CD4-positive, alpha-beta memory T cell (primary cell): ENCODE measurements at regions of chr3 and their contacts with region 1.

Region 1: GRCh38 chr3:107927361-107928083 is 163.3 kb downstream of the CD47 start:
- DNase-seq: peak; percentile 53 to 62 (median 58)
- H3K4me3 ChIP-seq: peak overlapping the region; percentile 54 to 65
- H3K4me3 Mint-ChIP-seq: peak overlapping the region; percentile 86 to 92 (median 92)
- H3K27ac ChIP-seq: no peak overlapping the region
- H3K27ac Mint-ChIP-seq: peak overlapping the region in 5 of 7 donors; percentile 24 to 80 (median 67)
- H3K4me1 ChIP-seq: peaks cover 7% of the 10 kb centered on the region
- H3K4me1 Mint-ChIP-seq: peaks cover 7 to 15% (median 9%) of the 10 kb centered on the region in 4 donors
- H3K27me3 ChIP-seq: no peaks in the 10 kb centered on the region
- H3K27me3 Mint-ChIP-seq: peaks cover 0 to 4% of the 10 kb centered on the region in 2 donors

Region 2: GRCh38 chr3:107531917-107532469 is 395.5 kb before region 1 on chr3:
- CTCF ChIA-PET with region 1: no interaction called
- POLR2A ChIA-PET with region 1: no interaction called
- intact Hi-C with region 1: no loop called
- DNase-seq: no peak
- H3K4me3 ChIP-seq: no peak overlapping the region
- H3K4me3 Mint-ChIP-seq: peak overlapping the region in 1 of 8 donors; percentile 3
- H3K27ac ChIP-seq: no peak overlapping the region
- H3K27ac Mint-ChIP-seq: peak overlapping the region in 1 of 7 donors; percentile 13
- H3K4me1 ChIP-seq: peaks cover 15% of the 10 kb centered on the region
- H3K4me1 Mint-ChIP-seq: peaks cover 19 to 52% (median 28%) of the 10 kb centered on the region in 4 donors
- H3K27me3 ChIP-seq: no peaks in the 10 kb centered on the region
- H3K27me3 Mint-ChIP-seq: no peaks in the 10 kb centered on the region

Region 3: DNA sequence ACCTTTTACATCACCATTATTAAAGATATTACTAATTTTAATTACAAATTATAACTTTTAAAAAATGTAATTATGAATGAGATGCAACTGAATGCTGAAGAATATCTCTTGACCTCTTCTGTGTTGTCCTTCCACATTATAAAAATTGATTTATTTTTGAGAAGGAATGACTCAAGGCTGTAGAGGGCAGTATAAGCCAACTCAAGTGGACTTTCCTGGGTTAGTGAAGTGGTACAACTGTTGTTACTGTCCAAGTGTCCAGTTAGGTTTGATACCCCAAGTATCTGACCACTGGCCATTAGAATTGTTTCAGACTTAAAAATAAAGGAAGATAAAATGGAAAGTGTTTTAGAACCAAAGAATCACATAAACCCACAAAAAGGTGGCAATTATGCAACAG is 352.9 kb before region 1 on chr3:
- CTCF ChIA-PET with region 1: interaction called, 4 read pairs
- POLR2A ChIA-PET with region 1: no interaction called
- intact Hi-C with region 1: loop called (anchors 1 kb)
- DNase-seq: peak in 1 of 5 donors; percentile 20
- H3K4me3 ChIP-seq: no peak overlapping the region
- H3K4me3 Mint-ChIP-seq: no peak overlapping the region
- H3K27ac ChIP-seq: no peak overlapping the region
- H3K27ac Mint-ChIP-seq: peak overlapping the region in 1 of 7 donors; percentile 8
- H3K4me1 ChIP-seq: peaks cover 15% of the 10 kb centered on the region
- H3K4me1 Mint-ChIP-seq: peaks cover 29 to 47% (median 38%) of the 10 kb centered on the region in 4 donors
- H3K27me3 ChIP-seq: no peaks in the 10 kb centered on the region
- H3K27me3 Mint-ChIP-seq: no peaks in the 10 kb centered on the region

Region 4: GRCh38 chr3:107904536-107905066 is 22.9 kb before region 1 on chr3:
- CTCF ChIA-PET with region 1: interaction called, 14 read pairs
- POLR2A ChIA-PET with region 1: no interaction called
- intact Hi-C with region 1: no loop called
- DNase-seq: no peak
- H3K4me3 ChIP-seq: no peak overlapping the region
- H3K4me3 Mint-ChIP-seq: no peak overlapping the region
- H3K27ac ChIP-seq: no peak overlapping the region
- H3K27ac Mint-ChIP-seq: no peak overlapping the region
- H3K4me1 ChIP-seq: no peaks in the 10 kb centered on the region
- H3K4me1 Mint-ChIP-seq: no peaks in the 10 kb centered on the region
- H3K27me3 ChIP-seq: no peaks in the 10 kb centered on the region
- H3K27me3 Mint-ChIP-seq: peaks cover 4 to 7% of the 10 kb centered on the region in 2 donors

Region 5: GRCh38 chr3:107943786-107944523 is 16.4 kb after region 1 on chr3:
- CTCF ChIA-PET with region 1: interaction called, 35 read pairs
- POLR2A ChIA-PET with region 1: no interaction called
- intact Hi-C with region 1: no loop called
- DNase-seq: no peak
- H3K4me3 ChIP-seq: no peak overlapping the region
- H3K4me3 Mint-ChIP-seq: no peak overlapping the region
- H3K27ac ChIP-seq: no peak overlapping the region
- H3K27ac Mint-ChIP-seq: no peak overlapping the region
- H3K4me1 ChIP-seq: peaks cover 15% of the 10 kb centered on the region
- H3K4me1 Mint-ChIP-seq: peaks cover 8 to 16% (median 13%) of the 10 kb centered on the region in 4 donors
- H3K27me3 ChIP-seq: no peaks in the 10 kb centered on the region
- H3K27me3 Mint-ChIP-seq: peaks cover 0 to 2% of the 10 kb centered on the region in 2 donors

Region 6: DNA sequence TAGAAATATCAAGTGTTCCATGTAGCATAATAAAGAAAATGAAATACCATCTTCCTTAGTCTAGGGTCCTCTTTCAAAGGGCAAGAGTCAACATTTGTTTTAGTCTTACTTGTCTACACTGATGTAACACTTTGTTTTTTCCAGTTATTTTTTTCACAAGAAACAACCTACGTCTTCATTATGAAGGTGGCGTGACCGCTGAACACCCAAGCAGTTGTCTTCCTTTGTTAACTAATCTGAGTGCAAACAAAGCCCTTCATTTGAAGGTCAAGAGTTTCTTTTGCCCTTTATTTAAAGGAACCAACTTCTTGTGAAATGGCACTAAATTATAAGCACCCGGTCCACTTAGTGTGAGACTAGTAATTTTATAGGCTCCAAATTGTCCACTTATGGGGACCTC is 90.1 kb after region 1 on chr3:
- CTCF ChIA-PET with region 1: interaction called, 16 read pairs
- POLR2A ChIA-PET with region 1: interaction called, 4 read pairs
- intact Hi-C with region 1: no loop called
- DNase-seq: no peak
- H3K4me3 ChIP-seq: no peak overlapping the region
- H3K4me3 Mint-ChIP-seq: no peak overlapping the region
- H3K27ac ChIP-seq: no peak overlapping the region
- H3K27ac Mint-ChIP-seq: no peak overlapping the region
- H3K4me1 ChIP-seq: no peaks in the 10 kb centered on the region
- H3K4me1 Mint-ChIP-seq: peaks cover 0 to 5% (median 4%) of the 10 kb centered on the region in 4 donors
- H3K27me3 ChIP-seq: no peaks in the 10 kb centered on the region
- H3K27me3 Mint-ChIP-seq: peaks cover 0 to 3% of the 10 kb centered on the region in 2 donors

Region 7: DNA sequence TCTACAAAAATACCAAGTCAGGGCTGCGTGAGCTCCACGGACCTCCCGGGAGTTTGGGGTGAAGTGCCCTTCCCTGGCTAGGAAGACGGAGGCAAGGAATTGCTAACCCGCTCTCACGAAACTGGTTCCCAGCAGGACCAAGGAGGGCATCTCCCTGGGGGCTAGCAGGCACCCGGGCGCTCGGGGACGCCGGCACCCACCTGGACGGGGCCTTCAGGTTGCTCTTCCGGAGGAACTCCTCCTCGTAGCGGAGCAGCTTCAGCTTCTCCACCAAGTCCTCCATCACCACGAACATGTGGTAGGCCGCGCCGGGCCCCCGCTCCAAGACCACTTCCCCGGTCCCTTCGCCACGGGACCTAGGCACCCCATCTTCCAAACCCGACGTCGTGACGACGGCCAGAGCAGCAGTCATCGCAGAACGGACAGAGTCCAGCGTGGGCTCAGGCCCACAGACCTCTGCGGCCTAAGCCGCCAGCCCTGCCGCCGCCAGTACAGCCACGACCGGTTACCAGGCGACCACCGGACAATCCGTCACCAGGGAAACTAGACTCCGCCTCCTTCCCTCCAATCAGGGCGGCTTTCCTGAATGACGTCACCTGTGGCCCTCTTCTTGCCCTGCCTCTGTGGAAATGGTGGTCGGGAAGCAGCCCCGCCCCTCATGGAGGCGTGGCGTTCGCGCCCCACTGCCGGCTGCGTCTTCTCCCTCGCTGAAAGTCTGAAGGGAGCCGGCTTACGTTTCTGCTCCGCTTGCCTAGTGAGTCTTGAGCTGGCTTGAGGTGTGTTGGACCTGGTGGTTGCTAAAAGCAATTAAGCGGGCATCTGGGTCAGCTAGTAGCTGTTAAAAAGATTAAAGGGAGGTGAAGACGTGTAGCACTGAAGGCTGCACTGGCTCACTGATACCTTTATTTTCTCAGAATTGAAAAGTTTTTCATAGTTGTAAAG is 294.7 kb after region 1 on chr3 and contains the start of gene IFT57:
- CTCF ChIA-PET with region 1: interaction called, 4 read pairs
- POLR2A ChIA-PET with region 1: interaction called, 3 read pairs
- intact Hi-C with region 1: loop called (anchors 2 kb)
- DNase-seq: peak; percentile 96 to 97 (median 97)
- H3K4me3 ChIP-seq: peak within 1 kb of the TSS; percentile 66 to 91
- H3K4me3 Mint-ChIP-seq: peak within 1 kb of the TSS; percentile 95 to 99 (median 98)
- H3K27ac ChIP-seq: peak within 1 kb of the TSS; percentile 95
- H3K27ac Mint-ChIP-seq: peak within 1 kb of the TSS; percentile 100
- H3K4me1 ChIP-seq: peaks cover 49% of the 10 kb centered on the region
- H3K4me1 Mint-ChIP-seq: peaks cover 37 to 57% (median 47%) of the 10 kb centered on the region in 4 donors
- H3K27me3 ChIP-seq: no peaks in the 10 kb centered on the region
- H3K27me3 Mint-ChIP-seq: peaks cover 0 to 1% of the 10 kb centered on the region in 2 donors
- total RNA-seq, gene IFT57: 24.1 to 26.1 TPM